Activated B cell treated with CpG ODN at 0.5 μM for 24 hours (primary cell): ENCODE measurements at regions of chr5 and their contacts with region 1.

Region 1: GRCh38 chr5:129204525-129204924 is 110.0 kb downstream of the ISOC1 start:
- DNase-seq: no peak
- ATAC-seq: no peak
- H3K4me3 Mint-ChIP-seq: no peak overlapping the region
- H3K27ac Mint-ChIP-seq: no peak overlapping the region
- H3K4me1 Mint-ChIP-seq: no peaks in the 10 kb centered on the region
- H3K27me3 Mint-ChIP-seq: no peaks in the 10 kb centered on the region
- CTCF ChIP-seq: no peak

Region 2: DNA sequence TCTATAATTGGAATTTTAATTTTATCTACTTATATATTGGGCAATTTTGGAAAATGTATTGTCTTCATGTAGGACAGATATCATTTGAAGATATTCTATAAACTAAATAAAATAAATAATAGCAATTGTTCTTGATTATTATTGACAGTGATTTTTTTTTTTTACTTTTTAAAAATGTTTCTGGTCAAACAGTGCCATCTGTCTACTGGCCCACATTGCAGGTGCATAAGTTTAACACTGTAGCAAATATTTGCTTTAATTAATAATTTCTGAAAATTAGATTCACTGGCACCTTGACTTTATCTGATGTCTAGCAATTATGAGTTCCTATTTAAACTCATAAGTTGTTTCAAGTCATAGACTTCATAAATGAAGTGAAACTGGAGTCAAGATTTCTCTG is 151.1 kb before region 1 on chr5:
- CTCF ChIA-PET with region 1: no interaction called
- POLR2A ChIA-PET with region 1: no interaction called
- intact Hi-C with region 1: loop called (anchors 10 kb)
- DNase-seq: no peak
- ATAC-seq: no peak
- H3K4me3 Mint-ChIP-seq: no peak overlapping the region
- H3K27ac Mint-ChIP-seq: no peak overlapping the region
- H3K4me1 Mint-ChIP-seq: no peaks in the 10 kb centered on the region
- H3K27me3 Mint-ChIP-seq: peaks cover 7% of the 10 kb centered on the region
- CTCF ChIP-seq: no peak